ENCODE measurements at regions of chr13 and their contacts with region 1.

Region 1: DNA sequence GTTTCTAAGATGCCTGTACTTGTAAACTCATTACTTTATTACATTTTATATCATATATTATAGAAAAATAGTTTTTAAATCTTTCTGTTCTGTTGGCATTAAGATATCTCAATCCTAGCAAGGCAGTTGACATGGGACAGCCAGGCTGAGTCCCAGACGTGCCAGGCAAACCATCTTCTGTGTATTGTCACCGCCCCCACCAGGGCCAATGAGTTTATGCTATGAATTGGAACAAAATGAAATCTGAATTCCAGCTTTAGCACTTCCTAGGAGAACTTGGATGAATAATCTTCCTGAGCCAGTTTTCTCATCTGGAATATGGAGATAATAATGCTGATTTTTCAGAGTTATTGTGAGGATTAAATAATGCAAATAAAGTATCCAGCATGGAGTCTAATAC is 79.9 kb upstream of the GSX1 start:
- DNase-seq: peak in 5 of 9 experiments; percentile 27 to 58 (median 36)
- ATAC-seq: no peak
- H3K4me3 ChIP-seq: no peak overlapping the region
- H3K4me3 Mint-ChIP-seq: no peak overlapping the region
- H3K27ac ChIP-seq: no peak overlapping the region
- H3K27ac Mint-ChIP-seq: no peak overlapping the region
- H3K4me1 ChIP-seq: no peaks in the 10 kb centered on the region
- H3K4me1 Mint-ChIP-seq: no peaks in the 10 kb centered on the region
- H3K27me3 ChIP-seq: no peaks in the 10 kb centered on the region
- H3K27me3 Mint-ChIP-seq: peaks cover 16% of the 10 kb centered on the region
- CTCF ChIP-seq: peak; percentile 21

Region 2: DNA sequence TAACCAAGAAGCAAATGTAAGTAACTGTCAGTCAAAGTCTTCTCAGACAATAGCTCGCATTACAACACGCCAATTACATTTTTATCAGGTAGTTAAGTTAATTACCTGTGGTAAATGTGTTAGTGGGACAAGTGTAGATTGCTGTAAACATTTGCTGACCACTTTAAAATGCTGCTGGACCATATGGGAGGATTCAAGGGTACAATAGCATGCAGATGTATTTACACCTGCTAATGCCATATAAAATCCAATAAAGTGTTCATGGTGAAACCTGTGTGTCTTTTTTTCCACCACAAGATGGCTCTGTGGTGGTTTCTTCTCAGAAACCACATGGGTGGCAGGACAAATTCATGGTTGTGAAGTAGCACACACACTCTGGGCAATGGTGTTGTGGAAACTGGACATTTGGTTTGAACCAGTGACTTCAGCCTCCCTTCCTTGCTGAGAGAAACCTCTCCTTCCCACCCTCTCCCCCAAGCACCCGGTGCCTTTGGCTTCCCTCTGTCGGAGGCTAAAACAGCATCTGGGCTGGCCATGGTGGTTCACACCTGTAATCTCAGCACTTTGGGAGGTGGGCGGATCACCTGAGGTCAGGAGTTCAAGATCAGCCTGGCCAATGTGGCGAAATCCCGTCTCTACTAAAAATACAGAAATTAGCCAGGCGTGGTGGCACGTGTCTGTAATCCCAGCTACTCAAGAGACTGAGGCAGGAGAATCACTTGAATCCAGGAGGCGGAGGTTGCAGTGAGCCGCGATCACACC is 306.1 kb before region 1 on chr13:
- CTCF ChIA-PET with region 1: interaction called, 4 read pairs
- POLR2A ChIA-PET with region 1: no interaction called
- intact Hi-C with region 1: loop called in 1 of 2 experiments (anchors 1 kb)
- DNase-seq: peak in 7 of 9 experiments; percentile 18 to 77 (median 44)
- ATAC-seq: peak; percentile 56
- H3K4me3 ChIP-seq: no peak overlapping the region
- H3K4me3 Mint-ChIP-seq: no peak overlapping the region
- H3K27ac ChIP-seq: no peak overlapping the region
- H3K27ac Mint-ChIP-seq: no peak overlapping the region
- H3K4me1 ChIP-seq: no peaks in the 10 kb centered on the region
- H3K4me1 Mint-ChIP-seq: peaks cover 4% of the 10 kb centered on the region
- H3K27me3 ChIP-seq: no peaks in the 10 kb centered on the region
- H3K27me3 Mint-ChIP-seq: no peaks in the 10 kb centered on the region
- CTCF ChIP-seq: peak; percentile 54

Region 3: GRCh38 chr13:27665333-27665732 is 47.1 kb before region 1 on chr13:
- CTCF ChIA-PET with region 1: no interaction called
- POLR2A ChIA-PET with region 1: no interaction called
- intact Hi-C with region 1: no loop called
- DNase-seq: no peak
- ATAC-seq: no peak
- H3K4me3 ChIP-seq: no peak overlapping the region
- H3K4me3 Mint-ChIP-seq: no peak overlapping the region
- H3K27ac ChIP-seq: no peak overlapping the region
- H3K27ac Mint-ChIP-seq: no peak overlapping the region
- H3K4me1 ChIP-seq: no peaks in the 10 kb centered on the region
- H3K4me1 Mint-ChIP-seq: peaks cover 2% of the 10 kb centered on the region
- H3K27me3 ChIP-seq: no peaks in the 10 kb centered on the region
- H3K27me3 Mint-ChIP-seq: no peaks in the 10 kb centered on the region
- CTCF ChIP-seq: no peak

Measured in CD8-positive, alpha-beta T cell (primary cell).